ENCODE measurements at regions of chr18 and their contacts with region 1.

Region 1: GRCh38 chr18:75209129-75209950 is at the start of gene PTGR3:
- DNase-seq: peak; percentile 70 to 86
- ATAC-seq: peak; percentile 52 to 76 (median 70)
- H3K4me3 ChIP-seq: peak within 1 kb of the TSS; percentile 93
- H3K4me3 Mint-ChIP-seq: peak within 1 kb of the TSS; percentile 99
- H3K27ac ChIP-seq: peak within 1 kb of the TSS; percentile 90
- H3K27ac Mint-ChIP-seq: peak within 1 kb of the TSS; percentile 98
- H3K4me1 ChIP-seq: peaks cover 39% of the 10 kb centered on the region
- H3K4me1 Mint-ChIP-seq: peaks cover 63 to 67% of the 10 kb centered on the region in 2 donors
- H3K27me3 ChIP-seq: peaks cover 3% of the 10 kb centered on the region
- H3K27me3 Mint-ChIP-seq: peaks cover 3 to 12% of the 10 kb centered on the region in 2 donors
- CTCF ChIP-seq: no peak
- total RNA-seq, gene PTGR3: 27.4 to 29.4 (median 28.5) TPM

Region 2: GRCh38 chr18:74597662-74598349 is 611.5 kb before region 1 on chr18 and contains the start of gene ZNF407:
- intact Hi-C with region 1: loop called (anchors 1 kb)
- DNase-seq: peak; percentile 85 to 94
- ATAC-seq: peak; percentile 72 to 88 (median 78)
- H3K4me3 ChIP-seq: peak within 1 kb of the TSS; percentile 95
- H3K4me3 Mint-ChIP-seq: peak within 1 kb of the TSS; percentile 93
- H3K27ac ChIP-seq: peak within 1 kb of the TSS; percentile 96
- H3K27ac Mint-ChIP-seq: peak within 1 kb of the TSS; percentile 94 to 95
- H3K4me1 ChIP-seq: peaks cover 14% of the 10 kb centered on the region
- H3K4me1 Mint-ChIP-seq: peaks cover 58 to 65% of the 10 kb centered on the region in 2 donors
- H3K27me3 ChIP-seq: no peaks in the 10 kb centered on the region
- H3K27me3 Mint-ChIP-seq: no peaks in the 10 kb centered on the region
- CTCF ChIP-seq: no peak
- total RNA-seq, gene ZNF407: 28.4 to 36.7 (median 36.3) TPM

Region 3: GRCh38 chr18:74942319-74942910 is 266.9 kb before region 1 on chr18:
- intact Hi-C with region 1: no loop called
- DNase-seq: peak in 1 of 2 donors; percentile 64
- ATAC-seq: no peak
- H3K4me3 ChIP-seq: no peak overlapping the region
- H3K4me3 Mint-ChIP-seq: no peak overlapping the region
- H3K27ac ChIP-seq: no peak overlapping the region
- H3K27ac Mint-ChIP-seq: no peak overlapping the region
- H3K4me1 ChIP-seq: no peaks in the 10 kb centered on the region
- H3K4me1 Mint-ChIP-seq: peaks cover 6 to 11% of the 10 kb centered on the region in 2 donors
- H3K27me3 ChIP-seq: no peaks in the 10 kb centered on the region
- H3K27me3 Mint-ChIP-seq: no peaks in the 10 kb centered on the region
- CTCF ChIP-seq: no peak

Region 4: GRCh38 chr18:75227535-75228296 is 18.4 kb after region 1 on chr18:
- intact Hi-C with region 1: loop called (anchors 2 kb)
- DNase-seq: no peak
- ATAC-seq: peak; percentile 39 to 51 (median 46)
- H3K4me3 ChIP-seq: no peak overlapping the region
- H3K4me3 Mint-ChIP-seq: peak overlapping the region; percentile 38
- H3K27ac ChIP-seq: no peak overlapping the region
- H3K27ac Mint-ChIP-seq: peak overlapping the region; percentile 67 to 88
- H3K4me1 ChIP-seq: peaks cover 48% of the 10 kb centered on the region
- H3K4me1 Mint-ChIP-seq: peaks cover 57 to 66% of the 10 kb centered on the region in 2 donors
- H3K27me3 ChIP-seq: no peaks in the 10 kb centered on the region
- H3K27me3 Mint-ChIP-seq: no peaks in the 10 kb centered on the region
- CTCF ChIP-seq: no peak

Region 5: DNA sequence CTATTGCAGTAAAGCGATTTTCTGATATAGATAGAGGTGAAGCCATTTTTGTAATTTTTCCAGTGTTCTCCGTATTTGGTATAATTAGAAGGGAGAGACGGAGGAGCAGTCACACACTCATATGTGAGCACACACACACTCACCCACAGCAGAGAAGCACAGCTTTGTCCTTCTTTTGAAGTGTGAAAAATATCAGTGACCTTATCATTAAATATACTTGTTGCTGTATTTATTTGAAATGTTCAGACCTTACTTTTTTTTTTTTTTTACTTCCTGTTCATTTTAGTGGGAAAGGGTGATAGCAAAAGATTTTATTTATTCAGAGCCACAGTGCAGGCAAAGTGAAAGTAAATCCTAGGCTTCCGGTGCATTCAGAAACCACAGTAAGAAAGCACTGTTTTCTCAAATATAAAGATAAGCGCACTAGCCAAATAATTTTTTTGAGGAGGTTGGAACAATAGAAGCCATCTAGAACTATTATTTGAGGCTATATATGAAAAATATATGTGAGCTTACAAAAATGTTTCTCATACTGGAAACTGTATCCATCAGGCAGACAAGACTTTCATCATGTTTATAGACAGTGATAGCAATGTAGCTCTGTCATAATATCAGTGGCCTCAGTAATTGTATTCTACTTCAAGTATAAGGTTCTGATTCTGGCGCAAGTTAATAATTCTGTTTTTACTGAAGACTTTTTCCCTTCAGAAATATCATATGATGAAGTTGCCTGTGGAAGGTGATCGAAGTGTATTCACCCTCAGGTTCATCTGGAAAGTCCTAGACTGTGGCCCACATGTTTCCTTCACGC is 38.5 kb after region 1 on chr18:
- intact Hi-C with region 1: loop called (anchors 1 kb)
- DNase-seq: peak in 1 of 2 donors; percentile 69
- ATAC-seq: peak; percentile 22 to 42 (median 35)
- H3K4me3 ChIP-seq: peak overlapping the region; percentile 35
- H3K4me3 Mint-ChIP-seq: peak overlapping the region; percentile 92
- H3K27ac ChIP-seq: peak overlapping the region; percentile 71
- H3K27ac Mint-ChIP-seq: peak overlapping the region; percentile 92 to 98
- H3K4me1 ChIP-seq: peaks cover 47% of the 10 kb centered on the region
- H3K4me1 Mint-ChIP-seq: peaks cover 57 to 78% of the 10 kb centered on the region in 2 donors
- H3K27me3 ChIP-seq: no peaks in the 10 kb centered on the region
- H3K27me3 Mint-ChIP-seq: no peaks in the 10 kb centered on the region
- CTCF ChIP-seq: no peak

Region 6: DNA sequence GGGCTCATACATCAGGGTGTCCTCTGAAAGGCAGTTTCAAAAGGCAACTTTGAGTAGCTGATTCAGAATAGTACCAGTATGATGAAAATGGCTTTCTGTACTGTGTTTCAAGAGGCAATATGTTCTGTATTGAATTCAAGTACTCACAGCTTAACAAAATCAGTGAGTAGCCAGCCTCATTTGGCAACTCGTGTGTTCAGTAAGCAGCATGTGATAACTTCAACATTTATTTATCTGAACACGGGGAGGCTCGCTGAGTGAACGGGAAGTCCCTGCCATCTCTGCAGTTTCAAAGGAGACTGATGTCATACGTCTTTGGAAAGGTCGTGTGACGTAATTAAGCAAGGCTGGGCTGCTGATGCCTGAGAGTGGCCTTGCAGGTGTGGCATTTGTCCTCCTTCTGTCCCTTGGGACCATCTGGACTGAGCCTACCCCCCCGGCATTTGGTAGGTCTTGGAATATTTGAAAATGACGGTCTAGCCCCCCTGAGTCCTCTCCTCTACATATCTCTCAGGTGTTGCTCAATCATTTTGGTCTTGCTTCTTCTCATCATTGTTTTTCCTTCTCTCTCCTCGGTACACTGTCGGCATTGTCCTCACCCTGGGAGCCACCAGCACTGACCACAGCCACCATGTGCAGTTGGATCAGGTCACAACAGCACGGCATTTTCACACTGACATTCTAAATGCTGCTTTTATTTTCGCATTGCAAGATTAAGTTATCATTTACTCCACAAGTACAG is 155.3 kb after region 1 on chr18:
- intact Hi-C with region 1: loop called (anchors 10 kb)
- DNase-seq: peak in 1 of 2 donors; percentile 6
- ATAC-seq: no peak
- H3K4me3 ChIP-seq: no peak overlapping the region
- H3K4me3 Mint-ChIP-seq: no peak overlapping the region
- H3K27ac ChIP-seq: no peak overlapping the region
- H3K27ac Mint-ChIP-seq: no peak overlapping the region
- H3K4me1 ChIP-seq: no peaks in the 10 kb centered on the region
- H3K4me1 Mint-ChIP-seq: no peaks in the 10 kb centered on the region
- H3K27me3 ChIP-seq: no peaks in the 10 kb centered on the region
- H3K27me3 Mint-ChIP-seq: peaks cover 2 to 9% of the 10 kb centered on the region in 2 donors
- CTCF ChIP-seq: no peak